ENCODE measurements at regions of chr15 and their contacts with region 1.

Region 1: GRCh38 chr15:25438601-25439368 is at the start of gene UBE3A:
- DNase-seq: peak; percentile 89
- H3K4me3 Mint-ChIP-seq: peak within 1 kb of the TSS; percentile 88
- H3K27ac Mint-ChIP-seq: peak within 1 kb of the TSS; percentile 91
- H3K4me1 Mint-ChIP-seq: peaks cover 29% of the 10 kb centered on the region
- H3K27me3 Mint-ChIP-seq: no peaks in the 10 kb centered on the region
- total RNA-seq, gene UBE3A: 85.7 to 92.3 TPM

Region 2: GRCh38 chr15:23642413-23643044 is 1796.3 kb before region 1 on chr15:
- CTCF ChIA-PET with region 1: no interaction called
- intact Hi-C with region 1: loop called (anchors 1 kb)
- DNase-seq: peak; percentile 66
- H3K4me3 Mint-ChIP-seq: no peak overlapping the region
- H3K27ac Mint-ChIP-seq: no peak overlapping the region
- H3K4me1 Mint-ChIP-seq: no peaks in the 10 kb centered on the region
- H3K27me3 Mint-ChIP-seq: peaks cover 3% of the 10 kb centered on the region

Region 3: DNA sequence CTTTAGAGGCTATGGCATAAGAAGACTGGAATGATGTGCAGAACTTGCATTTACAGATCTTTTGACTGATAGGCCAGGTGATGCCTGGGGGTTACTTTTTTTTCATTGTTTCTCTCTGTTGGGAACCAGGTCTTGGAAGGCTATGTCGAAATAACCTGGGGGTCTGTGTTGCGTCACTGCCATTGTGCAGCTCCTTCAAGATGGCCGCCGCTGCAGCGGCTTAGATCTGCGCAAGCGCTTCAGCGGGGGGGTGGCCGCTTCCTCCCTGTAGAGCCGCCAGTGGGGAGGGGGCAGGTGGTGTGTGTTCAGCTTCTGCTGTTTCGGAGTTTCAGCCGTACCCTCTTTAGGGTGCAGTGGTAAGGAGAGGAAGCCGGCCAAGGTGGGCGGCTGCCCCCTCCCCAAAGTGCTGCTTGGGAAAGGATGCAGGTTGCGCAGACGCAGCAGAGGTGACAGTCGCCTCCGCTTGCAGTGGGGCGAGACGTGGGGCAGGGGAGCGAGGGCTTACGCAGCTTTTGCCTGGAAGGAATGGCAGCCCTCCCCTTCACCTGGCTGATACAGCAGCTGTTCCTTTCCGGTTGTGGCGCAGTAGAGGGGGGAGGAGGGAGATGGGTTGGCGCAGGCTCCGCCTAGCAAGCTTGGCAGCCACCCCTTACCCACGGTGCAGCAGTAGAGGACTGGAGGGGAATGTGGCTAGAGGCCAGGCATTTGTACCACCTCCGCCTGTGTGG is 482.5 kb before region 1 on chr15:
- CTCF ChIA-PET with region 1: interaction called, 3 read pairs
- intact Hi-C with region 1: loop called (anchors 1 kb)
- DNase-seq: peak; percentile 78
- H3K4me3 Mint-ChIP-seq: peak overlapping the region; percentile 89
- H3K27ac Mint-ChIP-seq: peak overlapping the region; percentile 95
- H3K4me1 Mint-ChIP-seq: peaks cover 12% of the 10 kb centered on the region
- H3K27me3 Mint-ChIP-seq: no peaks in the 10 kb centered on the region

Region 4: DNA sequence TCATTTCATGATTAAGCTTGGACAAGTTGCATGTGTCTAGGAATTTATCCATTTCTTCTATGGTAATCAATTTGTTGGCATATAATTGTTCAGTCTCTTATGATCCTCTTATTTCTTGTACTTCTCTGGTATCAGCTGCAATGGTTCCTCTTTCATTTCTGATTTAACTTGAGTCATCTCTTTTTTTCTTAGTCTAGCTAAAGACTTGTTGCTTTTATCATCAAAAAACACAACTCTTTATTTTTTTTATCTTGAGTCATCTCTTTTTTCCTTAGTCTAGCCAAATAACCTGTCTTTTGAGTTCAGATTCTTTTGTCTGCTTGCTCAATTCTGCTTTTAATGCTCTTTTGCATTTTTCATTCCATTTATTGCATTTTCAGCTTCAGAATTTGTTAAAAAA is 37.3 kb before region 1 on chr15:
- CTCF ChIA-PET with region 1: no interaction called
- intact Hi-C with region 1: loop called (anchors 5 kb)
- DNase-seq: no peak
- H3K4me3 Mint-ChIP-seq: no peak overlapping the region
- H3K27ac Mint-ChIP-seq: no peak overlapping the region
- H3K4me1 Mint-ChIP-seq: peaks cover 42% of the 10 kb centered on the region
- H3K27me3 Mint-ChIP-seq: no peaks in the 10 kb centered on the region

Region 5: DNA sequence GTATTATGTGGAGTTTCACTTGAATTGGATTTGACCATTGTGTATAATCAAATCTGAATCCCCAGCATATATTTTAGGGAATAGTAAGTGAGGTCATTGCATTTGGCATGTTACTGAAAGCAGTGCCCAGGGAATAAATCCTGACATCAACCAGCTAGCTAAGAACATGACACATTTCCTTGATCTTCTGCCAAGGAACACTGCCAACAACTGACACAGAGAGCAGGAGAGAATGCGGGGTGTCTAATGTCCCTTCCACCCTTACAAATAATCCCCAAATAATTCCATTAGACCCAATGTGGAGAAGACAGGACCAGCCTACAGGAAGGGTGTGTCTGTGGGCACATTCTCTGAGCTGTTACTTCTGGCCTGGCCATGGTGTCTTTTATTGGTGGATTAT is 30.6 kb after region 1 on chr15:
- CTCF ChIA-PET with region 1: no interaction called
- intact Hi-C with region 1: no loop called
- DNase-seq: no peak
- H3K4me3 Mint-ChIP-seq: no peak overlapping the region
- H3K27ac Mint-ChIP-seq: no peak overlapping the region
- H3K4me1 Mint-ChIP-seq: no peaks in the 10 kb centered on the region
- H3K27me3 Mint-ChIP-seq: peaks cover 16% of the 10 kb centered on the region

Region 6: DNA sequence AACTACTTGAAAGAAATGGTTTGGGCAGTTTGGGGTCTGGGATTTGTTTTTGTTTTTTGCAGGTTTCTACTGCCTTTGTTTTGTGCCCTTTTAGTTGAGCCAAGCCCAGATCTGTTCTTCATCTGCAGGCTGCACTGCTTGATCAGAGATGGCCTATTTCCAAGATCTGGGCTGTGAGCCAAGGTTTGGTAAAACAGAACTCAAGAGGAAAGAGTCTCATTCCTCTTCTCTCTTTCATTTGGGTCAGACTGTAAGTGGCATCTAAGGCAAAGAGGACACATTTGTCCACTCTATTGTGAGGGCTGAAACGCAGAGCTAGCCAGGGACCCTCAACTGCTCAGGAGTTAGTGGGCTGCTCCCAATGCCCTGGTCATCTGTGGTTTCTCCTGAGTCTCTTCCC is 104.4 kb after region 1 on chr15:
- CTCF ChIA-PET with region 1: no interaction called
- intact Hi-C with region 1: no loop called
- DNase-seq: no peak
- H3K4me3 Mint-ChIP-seq: no peak overlapping the region
- H3K27ac Mint-ChIP-seq: no peak overlapping the region
- H3K4me1 Mint-ChIP-seq: no peaks in the 10 kb centered on the region
- H3K27me3 Mint-ChIP-seq: no peaks in the 10 kb centered on the region

Region 7: DNA sequence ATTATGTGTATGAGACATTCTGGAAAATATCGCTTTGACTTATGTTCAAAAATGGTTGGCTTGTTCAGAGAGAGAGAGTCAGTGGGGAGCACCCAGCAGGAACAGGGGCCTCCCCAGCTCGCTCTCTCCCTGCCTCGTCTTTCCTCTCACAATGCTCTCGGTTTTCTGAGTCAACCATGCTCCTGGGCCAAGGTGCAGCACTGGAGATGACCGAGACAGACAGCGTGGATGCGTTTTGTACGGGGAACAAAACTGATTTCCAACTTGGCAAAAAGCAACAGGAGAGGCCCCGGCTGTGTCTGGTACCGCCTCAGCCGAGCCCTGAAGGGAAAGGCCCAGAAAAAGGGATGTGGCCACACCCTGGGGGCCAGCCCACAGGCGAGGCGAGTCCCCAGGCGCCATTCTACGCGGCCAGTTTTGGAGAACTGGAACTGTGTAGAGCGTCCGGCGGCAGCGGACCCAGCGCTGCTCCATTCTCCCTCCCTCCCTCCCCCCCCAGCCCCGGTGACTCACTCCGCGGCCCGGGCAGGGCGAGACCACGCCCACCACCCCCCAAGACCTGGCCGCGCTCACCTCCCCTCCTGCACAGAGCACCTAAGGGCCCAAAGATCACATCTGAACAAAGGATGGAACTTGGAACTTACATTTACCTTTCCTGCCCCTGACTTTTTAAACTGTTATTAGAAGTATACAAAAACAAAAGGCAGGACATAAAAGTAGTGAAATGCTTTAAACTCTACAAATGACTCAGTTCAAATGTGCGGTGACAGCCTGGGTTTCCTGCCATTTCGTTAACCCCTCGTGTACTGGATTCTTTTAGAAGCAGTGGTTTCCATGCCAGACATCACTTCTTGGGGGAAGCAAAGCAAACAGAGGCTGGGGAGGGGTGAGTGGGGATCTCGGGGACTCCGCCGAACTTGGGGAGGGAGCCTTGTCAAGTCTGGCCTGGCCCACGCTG is 411.6 kb after region 1 on chr15:
- CTCF ChIA-PET with region 1: no interaction called
- intact Hi-C with region 1: loop called (anchors 1 kb)
- DNase-seq: peak; percentile 92
- H3K4me3 Mint-ChIP-seq: peak overlapping the region; percentile 93
- H3K27ac Mint-ChIP-seq: peak overlapping the region; percentile 97
- H3K4me1 Mint-ChIP-seq: peaks cover 86% of the 10 kb centered on the region
- H3K27me3 Mint-ChIP-seq: no peaks in the 10 kb centered on the region